PC-9 (cell line): ENCODE measurements at regions of chr2 and their contacts with region 1.

Region 1: GRCh38 chr2:96856776-96857673 is 791 bp downstream of the ANKRD39 start:
- DNase-seq: no peak
- H3K4me3 ChIP-seq: peak overlapping the region; percentile 72
- H3K27ac ChIP-seq: no peak overlapping the region
- H3K4me1 ChIP-seq: peaks cover 10% of the 10 kb centered on the region
- H3K27me3 ChIP-seq: no peaks in the 10 kb centered on the region
- CTCF ChIP-seq: no peak

Region 2: DNA sequence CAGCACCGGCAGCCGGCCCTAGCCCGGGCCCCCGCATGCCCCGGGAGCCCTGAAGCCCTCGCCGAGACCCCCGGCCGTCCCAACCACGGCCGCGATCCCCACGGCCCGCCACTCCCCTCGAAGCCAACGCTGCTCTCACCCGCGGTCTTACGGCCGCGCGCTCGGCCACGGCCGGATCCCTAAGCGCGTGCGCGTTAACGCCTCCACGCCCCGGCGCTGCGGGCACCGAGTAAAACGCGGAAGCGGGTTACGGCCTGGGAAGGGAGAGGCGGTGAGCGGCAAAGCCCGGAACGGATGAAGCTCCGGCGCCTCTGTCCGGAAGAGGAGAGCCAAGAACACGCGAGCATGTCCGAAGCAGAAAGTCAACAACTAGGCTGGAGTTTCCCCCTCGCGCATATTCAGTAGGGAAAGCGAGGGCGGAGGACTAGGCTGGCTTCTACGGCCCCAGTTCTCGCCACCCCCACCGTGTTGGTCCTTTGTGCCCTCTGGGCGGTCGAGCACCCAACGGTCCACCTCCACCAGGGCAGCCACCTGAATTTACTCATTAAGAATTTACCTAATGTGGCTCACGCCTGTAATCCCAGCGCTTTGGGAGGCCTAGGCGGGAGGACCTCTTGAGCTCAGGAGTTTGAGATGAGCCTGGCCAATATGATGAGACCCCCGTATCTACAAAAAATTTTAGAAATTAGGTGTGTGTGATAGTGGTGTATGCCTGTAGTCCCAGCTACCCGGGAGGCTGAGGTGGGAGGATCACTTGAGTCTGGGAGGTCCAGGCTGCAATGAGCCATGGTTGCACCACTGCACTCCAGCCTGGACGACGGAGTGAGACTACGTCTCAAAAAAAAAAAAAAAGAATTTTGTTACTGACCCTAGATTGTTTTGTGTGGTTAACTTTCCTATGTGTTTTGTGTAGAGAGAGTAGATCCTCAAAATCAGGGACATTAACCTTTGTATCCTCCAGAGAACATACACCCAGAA is 218.6 kb before region 1 on chr2 and contains the start of gene KANSL3:
- CTCF ChIA-PET with region 1: no interaction called
- POLR2A ChIA-PET with region 1: no interaction called
- intact Hi-C with region 1: no loop called
- DNase-seq: peak; percentile 81 to 94
- H3K4me3 ChIP-seq: peak within 1 kb of the TSS; percentile 96
- H3K27ac ChIP-seq: peak within 1 kb of the TSS; percentile 76
- H3K4me1 ChIP-seq: peaks cover 38% of the 10 kb centered on the region
- H3K27me3 ChIP-seq: no peaks in the 10 kb centered on the region
- CTCF ChIP-seq: no peak
- total RNA-seq, gene KANSL3: 52.0 and 53.8 TPM in 2 replicates

Region 3: GRCh38 chr2:96801005-96801785 is 55.8 kb before region 1 on chr2:
- CTCF ChIA-PET with region 1: no interaction called
- POLR2A ChIA-PET with region 1: no interaction called
- intact Hi-C with region 1: no loop called
- DNase-seq: peak; percentile 65 to 80
- H3K4me3 ChIP-seq: no peak overlapping the region
- H3K27ac ChIP-seq: no peak overlapping the region
- H3K4me1 ChIP-seq: no peaks in the 10 kb centered on the region
- H3K27me3 ChIP-seq: no peaks in the 10 kb centered on the region
- CTCF ChIP-seq: peak; percentile 97

Region 4: DNA sequence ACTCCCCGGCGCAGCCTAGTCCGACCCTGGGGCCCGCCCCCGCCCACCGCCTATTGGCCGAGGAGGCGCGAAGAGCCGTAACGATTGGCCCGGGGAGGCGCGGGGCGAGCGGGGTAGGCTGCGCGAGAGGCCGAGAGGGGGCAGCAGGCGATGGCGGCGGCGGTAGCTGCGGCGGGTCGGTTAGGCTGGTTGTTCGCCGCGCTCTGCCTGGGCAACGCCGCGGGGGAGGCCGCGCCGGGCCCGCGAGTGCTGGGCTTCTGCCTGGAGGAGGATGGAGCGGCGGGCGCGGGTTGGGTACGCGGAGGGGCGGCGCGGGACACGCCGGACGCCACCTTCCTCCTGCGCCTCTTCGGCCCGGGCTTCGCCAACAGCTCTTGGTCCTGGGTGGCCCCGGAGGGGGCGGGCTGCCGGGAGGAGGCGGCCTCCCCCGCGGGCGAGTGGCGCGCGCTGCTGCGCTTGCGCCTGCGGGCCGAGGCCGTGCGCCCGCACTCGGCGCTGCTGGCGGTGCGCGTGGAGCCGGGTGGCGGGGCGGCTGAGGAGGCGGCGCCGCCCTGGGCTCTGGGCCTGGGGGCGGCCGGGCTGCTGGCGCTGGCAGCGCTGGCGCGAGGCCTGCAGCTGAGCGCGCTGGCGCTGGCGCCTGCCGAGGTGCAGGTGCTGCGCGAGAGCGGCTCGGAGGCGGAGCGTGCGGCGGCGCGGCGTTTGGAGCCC is 40.7 kb before region 1 on chr2 and contains the start of gene CNNM3:
- CTCF ChIA-PET with region 1: interaction called, 5 read pairs
- POLR2A ChIA-PET with region 1: interaction called, 6 read pairs
- intact Hi-C with region 1: loop called (anchors 1 kb)
- DNase-seq: peak; percentile 87 to 99
- H3K4me3 ChIP-seq: peak within 1 kb of the TSS; percentile 87
- H3K27ac ChIP-seq: peak within 1 kb of the TSS; percentile 7; the same call in 1 of the 2 replicates
- H3K4me1 ChIP-seq: peaks cover 26% of the 10 kb centered on the region
- H3K27me3 ChIP-seq: no peaks in the 10 kb centered on the region
- CTCF ChIP-seq: peak; percentile 74
- total RNA-seq, gene CNNM3: 28.7 and 28.8 TPM in 2 replicates

Region 5: DNA sequence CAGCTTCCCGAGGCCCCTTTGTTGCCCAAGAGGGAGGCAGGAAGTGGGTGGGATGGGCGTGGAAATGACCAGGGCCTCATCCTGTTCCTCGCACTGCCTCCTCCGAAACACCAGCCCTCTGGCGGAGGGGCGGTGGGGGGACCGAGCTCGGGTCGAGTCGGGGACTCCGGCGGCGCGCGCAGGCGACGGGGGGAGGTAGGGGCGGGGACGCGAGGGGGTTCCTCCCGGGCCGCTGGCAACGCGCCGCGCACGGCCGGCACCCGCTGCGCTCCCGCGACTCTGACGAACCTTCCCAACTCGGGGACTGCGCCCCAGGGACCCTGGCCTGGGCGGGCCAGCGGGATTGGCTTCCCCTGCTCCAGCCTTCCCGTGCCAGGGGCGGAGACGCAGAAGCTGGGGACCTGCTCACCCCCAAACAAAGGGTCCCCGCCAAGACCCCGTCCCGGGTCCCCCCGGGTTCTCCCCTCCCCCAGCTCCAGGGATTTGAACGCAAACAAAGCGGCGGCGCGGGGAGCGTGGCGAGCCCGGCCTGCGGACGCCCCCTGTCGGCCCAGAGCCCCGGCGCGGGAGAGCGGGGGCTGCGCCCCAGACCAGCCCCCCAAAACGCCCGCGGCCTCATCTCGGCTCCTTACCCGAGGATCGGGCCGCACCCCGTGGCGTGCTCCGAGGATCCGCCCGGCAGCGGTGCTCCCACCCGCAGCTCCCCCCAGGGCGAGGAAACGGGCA is 11.7 kb after region 1 on chr2:
- CTCF ChIA-PET with region 1: interaction called, 14 read pairs
- POLR2A ChIA-PET with region 1: interaction called, 32 read pairs
- intact Hi-C with region 1: loop called (anchors 1 kb)
- DNase-seq: peak; percentile 72 to 87
- H3K4me3 ChIP-seq: peak overlapping the region; percentile 82
- H3K27ac ChIP-seq: peak overlapping the region; percentile 43; the same call in 1 of the 2 replicates
- H3K4me1 ChIP-seq: peaks cover 37% of the 10 kb centered on the region
- H3K27me3 ChIP-seq: no peaks in the 10 kb centered on the region
- CTCF ChIP-seq: peak; percentile 86

Region 6: DNA sequence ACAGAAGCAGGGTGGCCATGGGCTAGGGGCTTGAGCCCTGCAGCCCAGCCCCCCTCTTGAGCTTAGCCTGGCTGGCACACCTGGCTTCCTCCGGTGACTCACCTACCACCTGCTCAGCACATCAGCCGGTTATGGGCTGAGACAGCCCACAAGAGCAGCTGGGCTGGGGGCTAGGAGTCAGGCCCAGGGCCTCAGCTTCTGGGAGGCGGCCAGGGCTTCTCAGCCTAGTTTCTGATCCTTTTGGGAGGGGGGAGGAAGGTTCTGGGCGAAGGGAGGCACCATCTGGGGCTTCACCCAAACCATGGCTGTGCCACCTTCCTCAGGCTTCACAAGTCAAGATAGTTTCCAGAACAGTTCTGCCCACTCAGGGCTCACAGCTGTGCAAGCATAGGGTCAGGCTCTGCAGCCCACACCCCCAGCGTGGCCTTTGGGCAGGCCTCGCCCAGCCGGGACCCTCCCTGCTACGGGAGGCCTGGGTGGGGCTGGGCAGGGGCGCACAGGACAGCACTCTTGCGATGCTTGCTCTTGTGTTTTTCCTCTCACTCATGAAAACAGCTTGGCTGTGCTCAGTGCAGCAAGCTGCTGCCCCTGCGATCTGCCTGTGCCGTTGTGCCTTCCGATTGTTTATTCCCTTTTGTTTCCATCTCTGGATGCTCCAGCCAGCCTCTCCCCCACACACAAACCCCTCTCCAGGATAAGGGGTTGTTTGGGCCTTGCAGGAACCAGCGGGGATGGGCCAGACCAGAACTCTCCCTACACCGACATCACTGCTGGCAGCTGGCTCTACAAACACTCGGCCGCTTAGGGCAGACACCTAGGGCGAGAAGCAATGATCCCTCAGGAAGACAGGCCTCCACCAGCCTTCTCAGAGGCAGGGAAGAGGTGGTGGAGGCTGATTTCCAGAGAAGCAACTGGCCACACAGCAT is 39.0 kb after region 1 on chr2:
- CTCF ChIA-PET with region 1: interaction called, 7 read pairs
- POLR2A ChIA-PET with region 1: interaction called, 5 read pairs
- intact Hi-C with region 1: loop called (anchors 5 kb)
- DNase-seq: peak in 1 of 2 experiments; percentile 80
- H3K4me3 ChIP-seq: no peak overlapping the region
- H3K27ac ChIP-seq: 0 out of 2 replicates have a peak overlapping the region, but pooled peaks have one; percentile 7
- H3K4me1 ChIP-seq: peaks cover 58% of the 10 kb centered on the region
- H3K27me3 ChIP-seq: no peaks in the 10 kb centered on the region
- CTCF ChIP-seq: no peak

Region 7: DNA sequence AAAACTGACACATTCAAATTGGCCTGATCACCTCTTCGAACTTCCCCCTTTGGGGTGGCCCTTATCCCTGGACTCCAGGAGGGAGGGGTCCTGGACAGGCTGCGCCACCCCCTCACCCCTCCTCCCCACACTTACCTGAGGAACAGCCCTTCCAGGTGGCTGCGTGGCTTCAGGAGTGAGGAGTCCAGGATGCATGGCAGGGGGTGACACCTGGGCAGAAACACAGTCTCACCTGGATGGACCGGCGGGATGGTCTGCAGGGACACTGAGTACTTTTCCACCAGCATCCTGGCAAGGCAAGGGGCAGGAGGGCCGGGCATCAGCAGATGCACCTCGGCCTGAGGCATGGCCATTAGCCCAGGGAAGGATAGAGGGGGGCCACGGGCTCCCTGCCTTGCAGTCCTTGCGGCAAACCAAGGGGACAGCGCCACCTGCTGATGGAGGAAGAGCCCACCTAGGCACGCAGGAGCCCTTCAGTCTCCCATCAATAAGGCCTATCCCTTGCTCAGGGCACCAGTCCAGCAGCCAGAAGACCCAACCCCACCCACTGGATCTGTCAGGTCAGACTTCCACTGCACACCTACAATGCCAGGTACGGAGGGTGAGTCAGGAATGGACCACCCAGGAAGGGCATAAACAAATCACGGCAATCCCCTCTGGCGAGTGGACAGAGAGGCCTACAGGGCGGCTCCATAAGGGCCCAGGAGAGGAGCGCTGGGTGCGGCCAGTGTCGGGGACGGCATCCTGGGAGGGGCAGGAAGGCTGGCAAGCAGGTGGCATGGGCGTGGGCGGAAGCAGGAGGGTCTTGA is 103.3 kb after region 1 on chr2:
- CTCF ChIA-PET with region 1: interaction called, 18 read pairs
- POLR2A ChIA-PET with region 1: no interaction called
- intact Hi-C with region 1: loop called (anchors 1 kb)
- DNase-seq: peak; percentile 78 to 91
- H3K4me3 ChIP-seq: no peak overlapping the region
- H3K27ac ChIP-seq: no peak overlapping the region
- H3K4me1 ChIP-seq: no peaks in the 10 kb centered on the region
- H3K27me3 ChIP-seq: no peaks in the 10 kb centered on the region
- CTCF ChIP-seq: peak; percentile 99